ENCODE measurements at regions of chr7 and their contacts with region 1.

Region 1: DNA sequence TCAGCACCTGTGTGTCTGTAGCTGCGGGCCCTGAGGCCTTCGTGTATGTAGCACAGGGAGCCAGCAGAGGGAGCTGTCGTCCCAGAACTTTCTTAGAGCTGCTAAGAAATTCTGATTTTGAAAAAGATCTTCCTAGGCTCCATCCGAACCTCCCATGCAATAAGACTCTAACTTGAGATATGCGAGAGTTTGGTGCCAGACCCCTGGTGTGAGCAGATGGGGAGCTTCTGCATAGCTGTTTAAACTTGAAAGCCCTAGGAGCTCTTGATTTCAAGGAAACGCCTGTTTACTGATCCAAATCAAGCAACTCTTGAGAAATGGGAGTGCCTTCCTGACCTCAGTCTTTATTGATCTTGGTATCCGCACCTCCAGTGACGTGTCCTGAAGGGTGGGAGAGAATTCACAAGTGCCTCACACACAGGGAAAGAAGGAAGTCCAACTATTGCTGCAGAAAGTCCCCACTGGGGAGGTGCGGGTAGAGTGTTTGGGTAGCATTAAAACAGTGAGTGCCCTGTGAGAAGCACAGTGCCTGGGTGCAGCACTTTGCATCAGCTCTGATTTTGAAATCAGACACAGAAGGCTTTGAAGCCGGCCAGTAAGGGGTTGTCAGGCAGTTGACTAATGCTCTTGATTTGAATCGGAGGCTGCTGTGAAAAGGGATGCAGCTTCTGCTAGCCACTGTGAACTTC is 66.4 kb upstream of the STRIP2 start:
- DNase-seq: peak; percentile 92
- ATAC-seq: peak; percentile 89
- H3K4me3 Mint-ChIP-seq: peak overlapping the region; percentile 57
- H3K27ac Mint-ChIP-seq: peak overlapping the region; percentile 95
- H3K4me1 Mint-ChIP-seq: peaks cover 38% of the 10 kb centered on the region
- H3K27me3 Mint-ChIP-seq: no peaks in the 10 kb centered on the region

Region 2: GRCh38 chr7:129202058-129202777 is 165.6 kb before region 1 on chr7:
- CTCF ChIA-PET with region 1: no interaction called
- POLR2A ChIA-PET with region 1: no interaction called
- intact Hi-C with region 1: no loop called
- DNase-seq: no peak
- ATAC-seq: no peak
- H3K4me3 Mint-ChIP-seq: no peak overlapping the region
- H3K27ac Mint-ChIP-seq: no peak overlapping the region
- H3K4me1 Mint-ChIP-seq: no peaks in the 10 kb centered on the region
- H3K27me3 Mint-ChIP-seq: peaks cover 3% of the 10 kb centered on the region

Region 3: GRCh38 chr7:129354428-129355157 is 13.3 kb before region 1 on chr7:
- CTCF ChIA-PET with region 1: interaction called, 27 read pairs
- POLR2A ChIA-PET with region 1: interaction called, 3 read pairs
- intact Hi-C with region 1: no loop called
- DNase-seq: no peak
- ATAC-seq: no peak
- H3K4me3 Mint-ChIP-seq: no peak overlapping the region
- H3K27ac Mint-ChIP-seq: no peak overlapping the region
- H3K4me1 Mint-ChIP-seq: peaks cover 4% of the 10 kb centered on the region
- H3K27me3 Mint-ChIP-seq: no peaks in the 10 kb centered on the region

Region 4: DNA sequence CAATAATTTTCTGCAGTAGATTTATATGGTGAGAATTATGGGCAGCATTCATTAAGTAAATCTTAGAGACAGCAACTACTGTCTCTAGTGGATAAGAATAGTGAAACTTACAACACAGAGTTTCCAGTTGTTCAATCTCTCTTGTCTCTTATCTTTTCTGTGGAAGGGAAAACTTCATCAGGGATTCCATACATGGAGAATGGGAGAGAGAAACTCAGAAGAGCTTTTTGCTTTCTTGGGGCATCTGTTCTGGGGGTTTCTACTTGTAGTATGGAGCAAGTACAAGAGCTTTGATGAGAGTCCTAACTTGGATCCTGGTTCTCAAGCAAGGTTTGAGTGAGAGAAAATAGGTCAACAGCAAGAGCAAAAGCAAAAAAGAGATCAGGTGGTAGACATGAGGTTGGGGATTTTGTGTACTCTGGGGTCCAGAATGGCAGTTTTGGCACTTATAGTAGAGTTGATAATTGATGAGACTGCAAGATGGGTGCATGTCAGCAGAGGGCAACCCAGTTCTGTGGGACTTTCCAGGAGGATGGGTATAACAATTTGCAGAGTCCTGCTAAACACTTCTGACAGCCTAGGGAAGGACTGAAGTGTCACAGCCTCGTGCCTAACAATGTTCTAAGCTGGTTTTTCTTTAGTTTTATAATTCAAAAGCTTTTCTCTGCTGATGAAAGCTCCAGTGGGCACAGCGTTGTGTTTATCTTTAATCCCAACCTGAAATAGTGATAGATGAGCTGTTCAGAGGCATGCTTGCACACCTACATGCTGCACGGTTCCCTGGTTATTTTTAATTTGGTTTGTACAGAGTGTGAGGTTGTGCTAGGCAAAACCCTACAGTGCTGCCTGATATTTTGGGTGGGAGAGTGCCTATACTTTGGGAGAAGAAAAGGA is 34.4 kb after region 1 on chr7:
- CTCF ChIA-PET with region 1: interaction called, 6 read pairs
- POLR2A ChIA-PET with region 1: no interaction called
- intact Hi-C with region 1: loop called (anchors 2 to 5 kb)
- DNase-seq: peak; percentile 61
- ATAC-seq: peak; percentile 86
- H3K4me3 Mint-ChIP-seq: no peak overlapping the region
- H3K27ac Mint-ChIP-seq: peak overlapping the region; percentile 9
- H3K4me1 Mint-ChIP-seq: peaks cover 33% of the 10 kb centered on the region
- H3K27me3 Mint-ChIP-seq: no peaks in the 10 kb centered on the region

Region 5: DNA sequence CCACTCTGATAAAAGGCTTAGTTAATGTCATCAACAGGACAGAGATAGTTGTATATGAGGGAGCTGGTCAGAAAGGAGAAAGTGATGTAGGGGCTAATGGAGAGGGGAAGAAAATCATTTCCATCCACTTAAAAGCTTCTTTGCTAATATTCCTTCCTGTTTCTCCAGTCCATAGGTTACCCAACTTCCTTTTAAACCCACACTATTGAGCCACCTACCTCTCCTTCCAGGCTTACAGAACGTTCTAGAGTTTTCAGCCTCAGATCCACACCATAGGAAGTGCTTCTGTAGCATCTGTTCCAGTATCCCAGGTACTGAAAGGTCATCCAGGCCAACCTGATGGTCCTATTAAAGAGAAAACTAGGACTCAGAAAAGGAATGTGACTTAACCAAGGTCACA is 94.6 kb after region 1 on chr7:
- CTCF ChIA-PET with region 1: interaction called, 15 read pairs
- POLR2A ChIA-PET with region 1: no interaction called
- intact Hi-C with region 1: no loop called
- DNase-seq: no peak
- ATAC-seq: no peak
- H3K4me3 Mint-ChIP-seq: no peak overlapping the region
- H3K27ac Mint-ChIP-seq: no peak overlapping the region
- H3K4me1 Mint-ChIP-seq: no peaks in the 10 kb centered on the region
- H3K27me3 Mint-ChIP-seq: no peaks in the 10 kb centered on the region

Region 6: DNA sequence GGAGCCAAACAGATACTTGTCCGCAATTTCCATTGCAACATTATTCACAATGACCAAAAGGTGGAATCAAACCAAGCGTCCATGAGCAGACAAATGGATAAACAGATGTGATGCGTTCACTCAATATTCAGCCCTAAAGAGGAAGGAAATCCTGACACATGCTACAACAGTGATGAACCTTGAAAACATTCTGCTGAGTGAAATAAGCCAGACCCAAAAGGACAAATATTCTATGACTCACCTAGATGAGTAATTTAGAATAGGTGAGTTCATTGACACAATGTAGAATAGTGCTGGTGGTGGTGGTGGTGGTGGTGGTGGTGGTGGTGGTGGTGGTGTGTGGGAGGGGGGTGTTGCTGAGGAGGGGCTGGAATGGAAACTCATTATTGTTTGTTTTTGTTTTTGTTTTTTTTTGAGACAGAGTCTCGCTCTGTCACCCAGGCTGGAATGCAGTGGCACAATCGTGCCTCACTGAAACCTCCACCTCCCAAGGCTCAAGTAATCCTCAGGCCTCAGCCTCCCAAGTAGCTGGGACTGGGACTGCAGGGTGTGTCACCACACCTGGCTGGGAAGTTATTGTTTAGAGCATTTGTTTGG is 163.0 kb after region 1 on chr7:
- CTCF ChIA-PET with region 1: interaction called, 3 read pairs
- POLR2A ChIA-PET with region 1: no interaction called
- intact Hi-C with region 1: loop called (anchors 2 kb)
- DNase-seq: peak; percentile 70
- ATAC-seq: peak; percentile 96
- H3K4me3 Mint-ChIP-seq: no peak overlapping the region
- H3K27ac Mint-ChIP-seq: peak overlapping the region; percentile 13
- H3K4me1 Mint-ChIP-seq: peaks cover 11% of the 10 kb centered on the region
- H3K27me3 Mint-ChIP-seq: peaks cover 10% of the 10 kb centered on the region

Region 7: GRCh38 chr7:129646369-129647021 is 278.7 kb after region 1 on chr7:
- CTCF ChIA-PET with region 1: interaction called, 12 read pairs
- POLR2A ChIA-PET with region 1: no interaction called
- intact Hi-C with region 1: no loop called
- DNase-seq: no peak
- ATAC-seq: no peak
- H3K4me3 Mint-ChIP-seq: no peak overlapping the region
- H3K27ac Mint-ChIP-seq: no peak overlapping the region
- H3K4me1 Mint-ChIP-seq: peaks cover 30% of the 10 kb centered on the region
- H3K27me3 Mint-ChIP-seq: no peaks in the 10 kb centered on the region